ENCODE measurements at regions of chr4 and their contacts with region 1.

Region 1: GRCh38 chr4:90572996-90573395 is 445.8 kb downstream of the CCSER1 start:
- DNase-seq: no peak
- H3K4me3 ChIP-seq: no peak overlapping the region
- H3K27ac ChIP-seq: no peak overlapping the region
- H3K4me1 ChIP-seq: no peaks in the 10 kb centered on the region
- H3K27me3 ChIP-seq: no peaks in the 10 kb centered on the region
- CTCF ChIP-seq: no peak

Region 2: DNA sequence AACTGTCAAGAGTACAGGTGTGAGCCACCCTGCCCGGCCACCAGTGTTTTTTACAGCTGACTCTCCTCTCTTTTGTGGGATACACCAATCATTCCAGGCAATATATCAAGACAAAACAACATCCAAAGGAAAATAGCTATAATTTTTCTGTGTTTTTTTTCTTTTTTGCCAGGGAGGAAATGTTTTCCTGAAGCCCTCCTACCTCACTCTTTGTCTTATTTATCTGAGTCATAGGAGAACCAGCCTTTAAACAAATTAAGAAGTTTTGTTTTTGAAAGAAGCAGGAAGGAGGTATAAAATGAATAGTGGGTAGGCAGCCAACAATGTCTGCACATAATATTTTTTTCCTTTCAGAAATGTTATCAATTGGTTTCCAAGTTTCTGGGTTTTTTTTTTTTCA is 48.1 kb after region 1 on chr4:
- CTCF ChIA-PET with region 1: no interaction called
- POLR2A ChIA-PET with region 1: interaction called, 23 read pairs
- intact Hi-C with region 1: no loop called
- DNase-seq: no peak
- H3K4me3 ChIP-seq: no peak overlapping the region
- H3K27ac ChIP-seq: no peak overlapping the region
- H3K4me1 ChIP-seq: no peaks in the 10 kb centered on the region
- H3K27me3 ChIP-seq: no peaks in the 10 kb centered on the region
- CTCF ChIP-seq: no peak

Region 3: GRCh38 chr4:91267543-91267942 is 694.5 kb after region 1 on chr4:
- CTCF ChIA-PET with region 1: no interaction called
- POLR2A ChIA-PET with region 1: no interaction called
- intact Hi-C with region 1: no loop called
- DNase-seq: no peak
- H3K4me3 ChIP-seq: no peak overlapping the region
- H3K27ac ChIP-seq: no peak overlapping the region
- H3K4me1 ChIP-seq: no peaks in the 10 kb centered on the region
- H3K27me3 ChIP-seq: no peaks in the 10 kb centered on the region
- CTCF ChIP-seq: no peak

Measured in PC-9 (cell line).